ENCODE measurements at regions of chr11 and their contacts with region 1.

Region 1: GRCh38 chr11:61071208-61071681 is 31.0 kb upstream of the CD5 start:
- DNase-seq: peak; percentile 76
- CTCF ChIP-seq: peak; percentile 2

Region 2: DNA sequence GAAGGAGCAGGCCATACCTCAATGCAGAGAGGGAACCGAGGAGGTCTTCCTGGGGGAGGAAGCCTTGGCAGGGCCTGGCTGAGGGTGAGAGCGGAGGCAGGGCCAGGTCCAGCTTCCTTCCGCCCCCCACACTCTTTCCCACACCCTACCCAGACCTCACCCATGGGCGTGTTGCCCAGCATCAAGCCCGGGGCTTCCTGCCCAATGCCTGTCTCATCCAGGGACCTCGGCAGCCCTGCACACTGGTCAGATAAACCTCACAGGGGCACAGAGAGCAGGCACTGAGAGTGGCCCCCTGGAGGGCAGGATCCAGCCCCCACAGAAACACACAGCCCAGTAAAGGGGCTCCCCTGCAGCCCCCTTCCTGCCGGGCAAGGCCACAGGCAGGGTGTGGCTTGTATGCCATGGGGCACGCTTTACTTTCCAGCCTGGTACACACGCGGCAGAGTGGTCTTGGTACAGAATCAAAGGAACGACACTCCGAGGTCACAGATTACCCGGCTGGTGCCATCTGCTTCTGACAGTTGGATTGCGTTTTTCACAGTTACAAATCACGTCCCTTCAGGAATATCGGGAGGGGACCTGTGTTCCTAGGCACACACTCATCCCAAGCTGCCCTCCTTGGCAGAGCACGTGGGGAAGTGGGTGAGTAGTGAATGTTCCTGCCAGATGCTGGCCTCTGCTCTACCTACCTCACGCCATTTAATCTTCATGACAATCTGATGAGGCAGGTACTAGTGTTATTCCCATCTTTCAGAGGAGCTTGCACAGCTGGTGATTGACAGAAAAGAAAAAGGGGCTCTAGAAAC is 11.0 kb after region 1 on chr11:
- CTCF ChIA-PET with region 1: interaction called, 13 read pairs
- POLR2A ChIA-PET with region 1: no interaction called
- DNase-seq: no peak
- CTCF ChIP-seq: no peak

Measured in GM10248 (cell line).